ENCODE measurements at regions of chr19 and their contacts with region 1.

Region 1: GRCh38 chr19:8580710-8581281 is 3.6 kb upstream of the MYO1F start:
- DNase-seq: peak; percentile 62 to 94 (median 82)
- ATAC-seq: peak; percentile 47 to 73 (median 64)
- H3K4me3 ChIP-seq: no peak overlapping the region
- H3K4me3 Mint-ChIP-seq: no peak overlapping the region
- H3K27ac ChIP-seq: no peak overlapping the region
- H3K27ac Mint-ChIP-seq: no peak overlapping the region
- H3K4me1 ChIP-seq: peaks cover 14 to 58% of the 10 kb centered on the region in 2 experiments
- H3K4me1 Mint-ChIP-seq: peaks cover 31 to 40% (median 39%) of the 10 kb centered on the region in 3 donors
- H3K27me3 ChIP-seq: no peaks in the 10 kb centered on the region
- H3K27me3 Mint-ChIP-seq: no peaks in the 10 kb centered on the region

Region 2: DNA sequence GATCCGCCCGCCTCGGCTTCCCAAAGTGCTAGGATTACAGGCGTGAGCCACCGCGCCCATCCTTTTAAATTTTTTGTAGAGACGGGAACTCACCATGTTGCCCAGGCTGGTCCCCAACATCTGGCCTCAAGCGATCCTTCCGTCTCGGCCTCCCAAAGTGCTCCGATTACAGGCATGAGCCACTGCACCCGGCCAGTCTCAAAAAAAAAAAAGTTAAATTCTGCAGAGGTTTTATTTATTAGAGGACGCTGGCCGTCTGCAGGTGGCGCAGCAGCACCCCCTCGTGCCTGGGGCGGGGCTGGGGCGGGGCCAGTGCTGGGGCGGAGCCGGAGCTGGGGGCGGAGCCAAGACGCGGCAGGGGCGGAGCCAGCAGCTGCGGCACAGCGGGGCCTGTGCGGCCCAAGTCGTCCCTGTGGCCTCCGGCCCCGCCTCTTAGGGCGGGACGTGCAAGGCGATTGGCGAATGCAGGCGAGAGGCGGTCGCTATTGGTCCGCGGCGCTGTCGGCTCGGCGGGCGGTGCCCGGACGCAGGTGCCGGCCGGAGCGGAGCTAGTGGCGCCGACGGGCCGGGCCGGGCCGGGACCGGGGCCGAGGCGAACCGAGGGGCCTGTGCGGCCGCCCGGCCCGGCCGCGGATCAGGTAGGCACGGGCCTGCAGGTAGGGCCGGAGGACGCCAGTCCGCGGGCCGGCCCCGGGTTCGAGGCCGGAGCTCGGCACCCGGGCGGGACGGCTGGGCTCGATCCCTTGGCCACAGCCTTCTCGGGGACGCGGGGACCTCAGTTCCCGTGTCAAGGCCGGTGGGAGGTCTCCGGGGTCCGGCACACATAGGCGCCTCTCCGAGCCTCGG is 167.8 kb before region 1 on chr19 and contains the start of gene MARCHF2:
- CTCF ChIA-PET with region 1: interaction called in 1 of 2 experiments, 15 read pairs
- POLR2A ChIA-PET with region 1: no interaction called
- DNase-seq: peak; percentile 81 to 99 (median 95)
- ATAC-seq: peak; percentile 99 to 100 (median 100)
- H3K4me3 ChIP-seq: peak within 1 kb of the TSS; percentile 62 to 83
- H3K4me3 Mint-ChIP-seq: peak within 1 kb of the TSS; percentile 55 to 76 (median 66)
- H3K27ac ChIP-seq: no peak within 1 kb of the TSS
- H3K27ac Mint-ChIP-seq: peak within 1 kb of the TSS in 1 of 2 donors; percentile 41
- H3K4me1 ChIP-seq: peaks cover 7 to 14% of the 10 kb centered on the region in 2 experiments
- H3K4me1 Mint-ChIP-seq: peaks cover 4 to 12% (median 6%) of the 10 kb centered on the region in 3 donors
- H3K27me3 ChIP-seq: no peaks in the 10 kb centered on the region
- H3K27me3 Mint-ChIP-seq: no peaks in the 10 kb centered on the region
- total RNA-seq, gene MARCHF2: 20.6 to 40.7 (median 35.6) TPM

Region 3: DNA sequence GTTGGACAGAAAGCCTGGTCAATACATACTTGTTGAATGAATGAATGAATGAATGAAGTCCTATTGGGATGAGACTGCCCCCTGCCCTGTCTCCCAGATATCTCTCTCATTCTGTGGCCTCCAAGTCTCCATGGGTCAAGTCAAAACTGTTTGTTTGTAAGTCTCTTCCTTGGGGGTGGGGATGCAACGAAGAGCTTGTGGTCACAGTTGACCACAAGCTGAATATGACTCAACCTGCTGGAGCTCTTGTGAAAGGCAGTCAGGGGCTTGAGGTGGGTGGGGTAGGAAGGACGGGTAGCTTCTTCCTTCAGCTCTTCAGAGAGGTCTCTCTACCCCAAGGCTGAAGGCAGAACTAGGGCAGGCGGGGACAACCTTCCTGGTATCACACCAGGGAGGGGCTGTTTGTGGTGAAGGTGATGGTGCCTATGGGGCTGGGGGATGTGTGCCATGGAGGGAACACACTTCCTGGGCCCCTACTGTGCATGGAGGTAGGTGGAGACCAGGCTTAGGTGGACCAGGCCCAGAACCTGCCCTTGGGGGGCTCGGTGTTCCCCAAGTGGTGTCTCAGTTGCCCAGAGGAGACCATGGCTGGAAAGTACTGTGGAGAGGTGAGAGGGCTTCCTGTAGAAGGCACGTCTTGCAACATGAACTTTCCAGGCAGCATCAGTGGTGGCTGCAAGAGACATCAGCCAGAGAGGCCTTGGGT is 11.6 kb before region 1 on chr19:
- CTCF ChIA-PET with region 1: interaction called, 4 to 28 read pairs
- POLR2A ChIA-PET with region 1: interaction called in 1 of 2 experiments, 3 read pairs
- DNase-seq: peak; percentile 40 to 83 (median 65)
- ATAC-seq: peak; percentile 75 to 85 (median 80)
- H3K4me3 ChIP-seq: peak overlapping the region in 1 of 2 donors; percentile 47
- H3K4me3 Mint-ChIP-seq: peak overlapping the region; percentile 79 to 88 (median 87)
- H3K27ac ChIP-seq: peak overlapping the region; percentile 81
- H3K27ac Mint-ChIP-seq: peak overlapping the region; percentile 98 to 99
- H3K4me1 ChIP-seq: peaks cover 25 to 100% of the 10 kb centered on the region in 2 experiments
- H3K4me1 Mint-ChIP-seq: peaks cover 66 to 83% (median 76%) of the 10 kb centered on the region in 3 donors
- H3K27me3 ChIP-seq: no peaks in the 10 kb centered on the region
- H3K27me3 Mint-ChIP-seq: no peaks in the 10 kb centered on the region

Region 4: DNA sequence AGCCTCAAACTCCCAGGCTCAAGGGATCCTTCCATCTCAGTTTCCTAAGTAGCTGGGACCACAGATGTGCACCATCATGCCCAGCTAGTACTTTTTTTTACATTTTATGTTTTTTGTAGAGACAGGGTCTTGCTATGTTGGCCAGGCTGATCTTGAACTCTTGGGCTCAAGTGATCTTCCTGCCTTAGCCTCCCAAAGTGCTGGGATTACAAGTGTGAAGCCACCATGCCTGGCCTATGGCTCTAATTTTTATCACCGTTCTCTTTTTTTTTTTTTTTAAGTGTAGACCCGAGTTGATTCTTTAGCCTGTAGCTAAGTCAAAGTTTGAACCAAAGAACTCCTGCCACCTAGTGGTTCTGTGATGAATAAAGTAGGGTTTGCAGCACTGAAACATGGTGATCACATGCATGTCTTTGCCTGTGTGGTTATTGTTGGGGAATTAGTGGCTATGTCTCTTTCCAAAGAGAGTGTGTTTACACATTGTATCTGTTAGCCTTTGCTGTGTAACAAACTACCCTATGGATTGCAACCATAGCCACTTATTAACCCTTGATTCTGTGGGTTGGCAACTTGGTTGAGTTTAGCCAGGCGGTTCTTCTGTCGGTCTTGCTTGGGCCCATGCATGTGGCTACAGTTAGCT is 61.2 kb after region 1 on chr19:
- CTCF ChIA-PET with region 1: interaction called in 1 of 2 experiments, 16 read pairs
- POLR2A ChIA-PET with region 1: interaction called in 1 of 2 experiments, 3 read pairs
- DNase-seq: peak in 11 of 35 experiments; percentile 10 to 71 (median 23)
- ATAC-seq: peak; percentile 62 to 73 (median 65)
- H3K4me3 ChIP-seq: no peak overlapping the region
- H3K4me3 Mint-ChIP-seq: no peak overlapping the region
- H3K27ac ChIP-seq: no peak overlapping the region
- H3K27ac Mint-ChIP-seq: no peak overlapping the region
- H3K4me1 ChIP-seq: peaks cover 0 to 3% of the 10 kb centered on the region in 2 experiments
- H3K4me1 Mint-ChIP-seq: peaks cover 6 to 8% (median 7%) of the 10 kb centered on the region in 3 donors
- H3K27me3 ChIP-seq: peaks cover 0 to 36% of the 10 kb centered on the region in 2 experiments
- H3K27me3 Mint-ChIP-seq: peaks cover 10 to 26% of the 10 kb centered on the region in 2 donors

Region 5: DNA sequence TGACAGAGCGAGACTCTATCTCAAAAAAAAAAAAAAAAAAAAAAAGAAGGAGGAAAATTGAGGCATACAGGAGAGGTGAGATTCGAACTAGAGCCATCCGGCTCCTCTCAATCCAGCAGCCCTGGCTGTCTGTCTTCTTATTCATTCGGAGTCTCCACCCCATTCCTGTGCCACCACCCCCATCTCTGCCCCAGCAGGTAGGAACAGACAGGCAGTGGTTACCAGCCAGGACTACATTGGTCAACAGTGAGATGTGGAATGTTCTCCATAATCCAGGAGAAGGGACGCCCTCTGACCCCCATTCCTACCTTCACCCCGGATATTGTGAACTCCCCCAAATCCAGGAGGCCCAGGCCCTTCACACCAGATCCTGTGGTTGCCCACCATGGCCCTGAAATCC is 1656.9 kb after region 1 on chr19:
- CTCF ChIA-PET with region 1: no interaction called
- POLR2A ChIA-PET with region 1: interaction called in 1 of 2 experiments, 13 read pairs
- DNase-seq: no peak
- ATAC-seq: no peak
- H3K4me3 ChIP-seq: no peak overlapping the region
- H3K4me3 Mint-ChIP-seq: no peak overlapping the region
- H3K27ac ChIP-seq: no peak overlapping the region
- H3K27ac Mint-ChIP-seq: peak overlapping the region in 1 of 2 donors; percentile 11
- H3K4me1 ChIP-seq: peaks cover 9 to 30% of the 10 kb centered on the region in 2 experiments
- H3K4me1 Mint-ChIP-seq: peaks cover 13 to 30% (median 18%) of the 10 kb centered on the region in 3 donors
- H3K27me3 ChIP-seq: no peaks in the 10 kb centered on the region
- H3K27me3 Mint-ChIP-seq: no peaks in the 10 kb centered on the region

Measured in T-cell (primary cell).